ENCODE measurements at regions of chr21 and their contacts with region 1.

Region 1: DNA sequence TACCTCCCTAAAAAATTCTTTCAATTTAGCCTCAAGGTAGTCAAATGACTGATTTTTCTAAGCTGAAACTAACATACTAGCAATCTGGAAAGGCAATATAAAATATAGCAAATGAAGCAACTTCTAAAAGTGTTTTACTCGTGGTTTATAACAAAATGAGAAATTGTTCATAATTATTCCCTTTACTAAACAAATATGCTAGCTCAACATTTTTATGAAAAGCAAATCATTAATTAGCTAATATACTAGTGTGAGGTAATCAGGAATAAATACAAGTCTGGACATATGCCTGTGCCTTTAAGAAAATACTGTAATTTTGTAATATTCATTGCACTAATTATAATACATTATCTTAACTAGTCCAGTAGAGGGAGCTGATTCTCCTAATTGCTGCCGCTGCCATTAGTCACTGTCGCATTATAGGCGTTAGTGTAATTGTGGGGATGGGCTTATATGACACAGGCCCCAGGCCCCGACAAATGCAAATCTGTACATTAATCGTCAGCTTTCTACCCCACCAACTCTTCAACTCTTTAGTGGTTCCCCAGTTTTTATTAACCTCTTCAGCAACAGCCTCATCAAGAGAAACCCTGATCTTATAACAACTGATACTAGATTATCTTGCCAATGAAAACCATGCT is 160.9 kb downstream of the GABPA start:
- DNase-seq: peak in 1 of 10 donors; percentile 32
- H3K4me3 ChIP-seq: no peak overlapping the region
- H3K27ac ChIP-seq: peak overlapping the region in 53 of 59 donors; percentile 22 to 90 (median 69)
- H3K27me3 ChIP-seq: no peaks in the 10 kb centered on the region
- CTCF ChIP-seq: peak; percentile 54 to 90 (median 75)

Region 2: DNA sequence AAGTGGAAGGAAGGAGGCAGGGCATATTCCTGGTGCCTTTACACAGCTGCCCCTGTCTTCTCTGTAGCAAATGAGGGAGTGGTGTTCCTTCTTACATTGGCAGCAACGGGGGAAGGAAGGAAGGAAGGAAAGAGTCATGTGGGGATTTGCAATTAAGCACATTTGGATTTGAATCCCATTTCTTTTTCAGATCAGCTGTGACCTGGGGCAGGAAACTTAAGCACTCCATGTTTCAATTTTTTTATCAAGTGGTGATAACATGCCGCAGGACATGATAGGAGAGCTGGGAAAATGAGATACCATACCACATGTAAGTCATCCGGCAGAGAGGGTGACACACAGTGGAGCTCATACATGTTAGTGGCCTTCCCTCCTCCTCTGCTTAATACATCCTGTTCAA is 88.1 kb after region 1 on chr21:
- intact Hi-C with region 1: loop called in 1 of 2 experiments (anchors 10 kb)
- DNase-seq: no peak
- H3K4me3 ChIP-seq: peak overlapping the region in 6 of 59 donors; percentile 1 to 38 (median 13)
- H3K27ac ChIP-seq: peak overlapping the region in 58 of 59 donors; percentile 0 to 98 (median 80)
- H3K27me3 ChIP-seq: no peaks in the 10 kb centered on the region
- CTCF ChIP-seq: peak in 2 of 56 donors; percentile 7 to 8

Region 3: GRCh38 chr21:26007951-26008498 is 112.3 kb after region 1 on chr21:
- intact Hi-C with region 1: loop called in 1 of 2 experiments (anchors 10 kb)
- DNase-seq: no peak
- H3K4me3 ChIP-seq: peak overlapping the region in 51 of 59 donors; percentile 0 to 58 (median 23)
- H3K27ac ChIP-seq: peak overlapping the region; percentile 46 to 93 (median 82)
- H3K27me3 ChIP-seq: no peaks in the 10 kb centered on the region
- CTCF ChIP-seq: peak in 4 of 56 donors; percentile 8 to 19 (median 12)